Right ventricle myocardium superior (tissue), 1 donor: ENCODE measurements at regions of chr15 and their contacts with region 1.

Region 1: GRCh38 chr15:52780172-52780980 is 9.8 kb downstream of the ONECUT1 start:
- DNase-seq: peak; percentile 72
- ATAC-seq: peak; percentile 82

Region 2: GRCh38 chr15:52261498-52262242 is 518.7 kb before region 1 on chr15:
- intact Hi-C with region 1: no loop called
- DNase-seq: peak; percentile 72
- ATAC-seq: peak; percentile 89

Region 3: GRCh38 chr15:53197426-53197839 is 417.1 kb after region 1 on chr15:
- intact Hi-C with region 1: loop called (anchors 5 kb)
- DNase-seq: peak; percentile 49
- ATAC-seq: peak; percentile 74

Region 4: DNA sequence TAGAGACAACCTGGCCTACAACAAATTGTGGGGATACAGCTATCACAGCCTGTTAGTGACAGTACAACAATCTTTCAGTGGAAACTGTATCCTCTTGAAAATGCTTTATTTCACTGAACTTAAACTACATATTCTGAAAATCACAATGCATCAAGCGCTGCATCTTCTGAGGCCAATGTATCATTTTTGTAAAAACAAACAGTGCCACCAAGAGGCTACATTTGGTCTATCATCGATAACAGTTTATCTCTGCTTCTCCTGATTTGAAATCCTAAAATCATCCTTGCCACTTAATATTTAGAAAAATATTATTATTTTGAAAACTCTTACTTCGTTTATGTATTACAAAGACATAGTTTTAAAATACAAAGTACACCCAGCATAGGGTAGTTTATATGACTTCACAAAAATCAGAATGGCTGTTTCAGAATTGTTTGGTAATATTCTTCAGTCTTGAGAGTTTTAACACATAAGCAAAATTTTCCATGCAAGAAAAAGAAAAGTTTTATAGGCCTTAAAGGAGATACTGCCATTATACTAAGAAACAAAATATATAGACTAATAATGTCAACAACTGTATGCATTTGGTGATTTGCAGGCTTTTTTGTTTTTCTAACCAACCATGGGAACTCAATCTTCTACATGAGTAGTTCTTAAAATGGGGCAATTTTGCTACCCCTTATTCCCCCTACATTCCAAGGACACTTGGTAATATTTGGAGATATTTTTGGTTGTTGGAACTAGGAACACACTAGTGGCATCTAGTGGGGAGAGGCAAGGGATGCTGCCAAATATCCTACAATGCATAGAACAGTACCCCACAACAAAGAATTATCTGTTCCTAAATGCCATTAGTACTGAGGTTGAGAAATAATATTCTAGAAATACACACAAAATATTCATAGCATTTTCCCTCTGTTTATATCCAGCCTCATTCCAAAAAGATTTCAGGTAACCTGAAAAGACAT is 936.8 kb after region 1 on chr15:
- intact Hi-C with region 1: loop called (anchors 5 kb)
- DNase-seq: no peak
- ATAC-seq: no peak